Sigmoid colon (tissue), 7 donors: ENCODE measurements at regions of chr22 and their contacts with region 1.

Region 1: DNA sequence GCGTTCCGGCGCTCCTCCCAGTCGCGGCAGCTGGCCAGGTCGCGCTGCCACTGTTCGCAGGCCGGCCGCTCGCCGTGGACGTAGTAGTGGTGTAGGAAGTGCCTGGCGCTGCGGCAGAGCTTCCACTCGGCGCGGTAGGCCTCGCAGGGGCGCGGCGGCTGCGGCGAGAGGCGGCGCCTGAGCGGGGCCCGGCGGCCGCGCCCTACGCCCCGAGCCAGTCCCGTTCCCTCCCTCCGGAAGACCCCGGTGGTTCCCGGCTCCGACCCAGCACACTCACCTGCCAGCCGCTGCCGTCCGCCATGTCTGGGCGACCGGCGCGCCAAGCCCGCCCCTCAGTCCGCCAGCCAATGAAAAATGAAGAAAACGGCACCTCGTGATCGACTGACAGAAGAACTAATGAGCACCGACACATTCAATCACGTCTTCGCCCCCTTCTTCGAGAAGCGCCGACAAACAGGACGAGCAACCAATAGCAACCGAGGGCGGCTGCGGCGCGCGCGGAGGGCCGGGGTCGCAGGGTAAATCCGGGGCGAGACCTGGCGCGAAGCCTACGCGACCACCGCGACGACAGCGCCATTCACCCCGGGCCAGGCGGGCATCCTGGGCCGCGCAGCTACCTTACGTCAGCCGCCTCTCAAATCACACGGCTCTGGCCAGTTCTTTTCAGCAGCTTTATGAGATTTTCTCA is at the start of gene C22orf39:
- DNase-seq: peak; percentile 96
- H3K4me3 ChIP-seq: peak within 1 kb of the TSS; percentile 64 to 94 (median 72)
- H3K27ac ChIP-seq: peak within 1 kb of the TSS; percentile 88 to 93 (median 92)
- H3K4me1 ChIP-seq: peaks cover 0 to 27% (median 23%) of the 10 kb centered on the region in 4 donors
- H3K27me3 ChIP-seq: no peaks in the 10 kb centered on the region
- CTCF ChIP-seq: no peak
- EP300 ChIP-seq: peak in 1 of 4 donors; percentile 12
- POLR2A ChIP-seq: peak; percentile 53 to 63
- total RNA-seq, gene C22orf39: 88.1 to 135 (median 102) TPM

Region 2: DNA sequence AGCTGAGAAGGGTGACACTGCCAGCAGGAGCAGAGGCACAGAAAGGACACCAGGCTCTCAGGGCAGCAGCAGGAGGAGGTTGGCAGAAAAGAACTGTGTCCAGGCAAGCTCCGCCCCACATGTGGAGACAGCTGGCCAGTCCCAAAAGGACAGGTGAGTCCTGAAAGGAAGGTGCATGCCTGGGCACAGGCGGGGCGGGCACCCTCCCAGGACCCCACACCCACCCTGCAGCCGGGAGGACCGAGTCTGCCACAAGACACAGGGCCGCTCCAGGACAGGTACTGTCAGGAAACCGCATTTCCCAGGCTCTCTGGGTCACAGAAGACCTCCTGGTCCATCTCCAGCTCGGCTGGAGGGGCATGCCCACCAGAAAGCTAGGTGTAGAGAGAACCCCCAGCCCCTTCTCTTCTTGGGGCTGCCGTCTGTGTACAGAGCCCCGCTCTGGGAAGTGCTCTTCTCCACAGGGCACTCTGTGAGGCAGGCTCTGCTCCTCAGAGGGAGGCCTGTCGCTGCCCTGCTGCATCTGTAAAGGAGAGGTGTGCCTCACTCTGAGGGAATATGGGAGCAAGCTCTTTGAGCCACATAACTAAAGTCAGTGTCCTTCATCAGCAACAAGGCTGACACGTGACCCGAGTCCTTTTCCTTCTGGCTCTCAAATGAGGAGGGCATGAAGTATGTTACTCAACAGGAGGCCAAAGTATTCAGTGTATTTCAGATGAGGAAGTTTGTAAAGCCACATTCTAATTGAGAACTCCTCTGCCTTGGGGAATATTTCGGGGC is 206.5 kb before region 1 on chr22:
- intact Hi-C with region 1: no loop called
- DNase-seq: no peak
- H3K4me3 ChIP-seq: no peak overlapping the region
- H3K27ac ChIP-seq: no peak overlapping the region
- H3K4me1 ChIP-seq: no peaks in the 10 kb centered on the region
- H3K27me3 ChIP-seq: no peaks in the 10 kb centered on the region
- CTCF ChIP-seq: no peak
- EP300 ChIP-seq: no peak
- POLR2A ChIP-seq: no peak

Region 3: DNA sequence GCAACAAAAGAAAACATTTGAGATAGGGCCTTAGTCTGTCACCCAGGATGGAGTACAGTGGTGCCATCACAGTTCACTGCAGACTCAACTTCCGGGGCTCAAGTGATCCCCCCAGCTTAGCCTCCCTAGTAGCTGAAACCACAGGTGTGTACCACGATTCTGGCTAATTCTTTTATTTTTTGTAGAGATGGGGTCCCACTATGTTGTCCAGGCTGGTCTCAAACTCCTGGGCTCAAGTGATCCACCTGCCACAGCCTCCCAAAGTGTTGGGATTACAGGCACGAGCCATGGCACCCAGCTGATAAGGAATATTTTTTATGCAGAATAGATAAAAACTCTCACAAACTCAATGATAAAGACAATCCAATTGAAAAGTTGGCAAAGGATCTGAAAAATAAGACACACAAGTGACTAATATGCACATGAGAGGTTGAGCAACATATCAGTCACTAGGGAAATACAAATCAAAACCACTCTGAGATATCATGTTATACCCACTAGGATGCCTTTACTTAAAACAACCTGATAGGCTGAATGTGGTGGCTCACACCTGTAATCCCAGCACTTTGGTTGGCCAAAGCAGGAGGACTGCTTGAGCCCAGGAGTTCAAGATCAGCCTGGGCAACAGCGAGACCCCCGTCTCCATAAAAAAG is 122.1 kb before region 1 on chr22:
- intact Hi-C with region 1: no loop called
- DNase-seq: no peak
- H3K4me3 ChIP-seq: no peak overlapping the region
- H3K27ac ChIP-seq: no peak overlapping the region
- H3K4me1 ChIP-seq: no peaks in the 10 kb centered on the region
- H3K27me3 ChIP-seq: no peaks in the 10 kb centered on the region
- CTCF ChIP-seq: no peak
- EP300 ChIP-seq: no peak
- POLR2A ChIP-seq: no peak

Region 4: DNA sequence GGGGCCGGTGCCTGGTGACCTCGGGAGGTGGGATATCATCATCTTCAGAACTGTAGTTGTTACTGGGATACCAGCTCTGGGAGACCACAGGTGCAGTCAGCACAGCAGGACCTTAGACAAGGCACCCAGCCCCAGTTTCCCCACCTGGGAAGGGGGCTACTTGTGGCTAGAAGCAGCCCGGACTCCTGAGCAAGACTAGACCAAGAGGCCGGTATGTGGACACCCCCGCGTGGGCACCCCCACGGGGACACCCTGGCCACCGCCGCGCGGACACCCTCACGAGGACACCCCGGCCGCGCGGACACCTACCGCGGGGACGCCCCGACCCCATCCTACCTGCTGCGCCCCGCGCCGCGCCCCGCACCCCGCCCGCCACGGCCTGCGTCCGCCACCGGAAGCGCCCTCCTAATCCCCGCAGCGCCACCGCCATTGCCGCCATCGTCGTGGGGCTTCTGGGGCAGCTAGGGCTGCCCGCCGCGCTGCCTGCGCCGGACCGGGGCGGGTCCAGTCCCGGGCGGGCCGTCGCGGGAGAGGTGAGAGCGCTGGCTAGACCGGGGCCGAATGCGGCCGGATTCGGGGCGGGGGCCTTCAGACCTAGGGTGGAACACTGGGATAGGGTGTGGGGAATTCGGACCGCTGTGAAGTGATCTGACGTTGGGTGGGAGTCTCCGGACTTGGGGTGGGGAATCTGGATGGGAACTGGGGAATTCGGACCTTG is 494.0 kb after region 1 on chr22 and contains the starts of genes COMT and TXNRD2:
- intact Hi-C with region 1: loop called (anchors 5 kb)
- DNase-seq: peak; percentile 82
- H3K4me3 ChIP-seq: peak within 1 kb of the TSS; percentile 50 to 86 (median 74)
- H3K27ac ChIP-seq: peak within 1 kb of the TSS; percentile 90 to 97 (median 93)
- H3K4me1 ChIP-seq: peaks cover 0 to 73% (median 55%) of the 10 kb centered on the region in 4 donors
- H3K27me3 ChIP-seq: no peaks in the 10 kb centered on the region
- CTCF ChIP-seq: no peak
- EP300 ChIP-seq: no peak
- POLR2A ChIP-seq: peak; percentile 21 to 64
- total RNA-seq, gene COMT: 106 to 162 (median 112) TPM
- total RNA-seq, gene TXNRD2: 16.3 to 29.6 (median 21.1) TPM